ENCODE measurements at regions of chr11 and their contacts with region 1.

Region 1: GRCh38 chr11:72471005-72471898 is 36.9 kb upstream of the CLPB start:
- DNase-seq: peak; percentile 28 to 79 (median 51)
- ATAC-seq: peak; percentile 88
- H3K4me3 ChIP-seq: no peak overlapping the region
- H3K4me3 Mint-ChIP-seq: no peak overlapping the region
- H3K27ac ChIP-seq: no peak overlapping the region
- H3K27ac Mint-ChIP-seq: no peak overlapping the region
- H3K4me1 ChIP-seq: peaks cover 3% of the 10 kb centered on the region
- H3K4me1 Mint-ChIP-seq: peaks cover 4% of the 10 kb centered on the region
- H3K27me3 ChIP-seq: no peaks in the 10 kb centered on the region
- H3K27me3 Mint-ChIP-seq: peaks cover 23% of the 10 kb centered on the region
- CTCF ChIP-seq: peak; percentile 71

Region 2: GRCh38 chr11:72460091-72460647 is 11.1 kb before region 1 on chr11:
- CTCF ChIA-PET with region 1: interaction called, 17 read pairs
- POLR2A ChIA-PET with region 1: no interaction called
- intact Hi-C with region 1: no loop called
- DNase-seq: no peak
- ATAC-seq: no peak
- H3K4me3 ChIP-seq: no peak overlapping the region
- H3K4me3 Mint-ChIP-seq: no peak overlapping the region
- H3K27ac ChIP-seq: no peak overlapping the region
- H3K27ac Mint-ChIP-seq: no peak overlapping the region
- H3K4me1 ChIP-seq: no peaks in the 10 kb centered on the region
- H3K4me1 Mint-ChIP-seq: no peaks in the 10 kb centered on the region
- H3K27me3 ChIP-seq: peaks cover 0 to 3% of the 10 kb centered on the region in 2 experiments
- H3K27me3 Mint-ChIP-seq: peaks cover 14% of the 10 kb centered on the region
- CTCF ChIP-seq: no peak

Region 3: DNA sequence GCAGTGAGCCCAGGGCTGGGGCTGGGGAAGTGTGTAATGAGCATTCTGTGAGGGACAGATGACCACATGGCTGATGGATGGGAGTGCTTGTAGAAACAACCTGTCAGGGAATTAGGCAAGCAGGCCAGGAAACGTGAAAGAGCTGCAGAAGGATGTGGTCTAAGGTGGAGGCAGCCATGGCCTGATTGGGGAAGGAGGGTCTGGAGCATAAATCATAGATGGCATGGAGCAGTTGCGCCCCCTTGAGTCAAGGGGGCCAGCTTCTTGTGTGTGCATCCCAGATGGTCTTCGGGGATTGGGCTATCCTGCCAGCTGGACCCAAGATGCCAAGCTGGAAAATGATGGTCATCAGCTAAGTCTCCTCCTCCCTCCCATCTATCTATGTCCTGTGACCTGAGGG is 82.5 kb after region 1 on chr11:
- CTCF ChIA-PET with region 1: interaction called, 21 read pairs
- POLR2A ChIA-PET with region 1: no interaction called
- intact Hi-C with region 1: loop called in 1 of 2 experiments (anchors 1 kb)
- DNase-seq: peak in 3 of 9 experiments; percentile 24 to 70 (median 64)
- ATAC-seq: no peak
- H3K4me3 ChIP-seq: no peak overlapping the region
- H3K4me3 Mint-ChIP-seq: no peak overlapping the region
- H3K27ac ChIP-seq: no peak overlapping the region
- H3K27ac Mint-ChIP-seq: no peak overlapping the region
- H3K4me1 ChIP-seq: no peaks in the 10 kb centered on the region
- H3K4me1 Mint-ChIP-seq: peaks cover 9% of the 10 kb centered on the region
- H3K27me3 ChIP-seq: no peaks in the 10 kb centered on the region
- H3K27me3 Mint-ChIP-seq: peaks cover 6% of the 10 kb centered on the region
- CTCF ChIP-seq: no peak

Region 4: GRCh38 chr11:72585762-72586311 is 114.6 kb after region 1 on chr11:
- CTCF ChIA-PET with region 1: interaction called, 12 read pairs
- POLR2A ChIA-PET with region 1: no interaction called
- intact Hi-C with region 1: no loop called
- DNase-seq: peak; percentile 25 to 86 (median 56)
- ATAC-seq: peak; percentile 80
- H3K4me3 ChIP-seq: peak overlapping the region in 1 of 2 experiments; percentile 36
- H3K4me3 Mint-ChIP-seq: peak overlapping the region; percentile 87
- H3K27ac ChIP-seq: no peak overlapping the region
- H3K27ac Mint-ChIP-seq: peak overlapping the region; percentile 39
- H3K4me1 ChIP-seq: peaks cover 29% of the 10 kb centered on the region
- H3K4me1 Mint-ChIP-seq: peaks cover 27% of the 10 kb centered on the region
- H3K27me3 ChIP-seq: peaks cover 5 to 9% of the 10 kb centered on the region in 2 experiments
- H3K27me3 Mint-ChIP-seq: peaks cover 30% of the 10 kb centered on the region
- CTCF ChIP-seq: peak; percentile 85

Region 5: GRCh38 chr11:72683782-72684200 is 212.5 kb after region 1 on chr11:
- CTCF ChIA-PET with region 1: interaction called, 27 read pairs
- POLR2A ChIA-PET with region 1: no interaction called
- intact Hi-C with region 1: loop called (anchors 1 kb)
- DNase-seq: peak; percentile 48 to 80 (median 66)
- ATAC-seq: peak; percentile 82
- H3K4me3 ChIP-seq: no peak overlapping the region
- H3K4me3 Mint-ChIP-seq: no peak overlapping the region
- H3K27ac ChIP-seq: no peak overlapping the region
- H3K27ac Mint-ChIP-seq: peak overlapping the region; percentile 27
- H3K4me1 ChIP-seq: peaks cover 6% of the 10 kb centered on the region
- H3K4me1 Mint-ChIP-seq: peaks cover 15% of the 10 kb centered on the region
- H3K27me3 ChIP-seq: no peaks in the 10 kb centered on the region
- H3K27me3 Mint-ChIP-seq: no peaks in the 10 kb centered on the region
- CTCF ChIP-seq: peak; percentile 90

Measured in CD8-positive, alpha-beta T cell (primary cell).